HEK293T (cell line): ENCODE measurements at regions of chr16 and their contacts with region 1.

Region 1: GRCh38 chr16:29790183-29790952 is at the start of gene KIF22:
- DNase-seq: peak; percentile 99

Region 2: GRCh38 chr16:29678691-29679267 is 111.6 kb before region 1 on chr16 and contains the start of gene QPRT:
- CTCF ChIA-PET with region 1: interaction called, 3 read pairs
- POLR2A ChIA-PET with region 1: interaction called, 12 read pairs
- DNase-seq: peak; percentile 70

Region 3: GRCh38 chr16:29700253-29700987 is 89.9 kb before region 1 on chr16:
- CTCF ChIA-PET with region 1: interaction called, 6 read pairs
- POLR2A ChIA-PET with region 1: interaction called, 12 read pairs
- DNase-seq: peak; percentile 87

Region 4: GRCh38 chr16:29729116-29729521 is 61.2 kb before region 1 on chr16:
- CTCF ChIA-PET with region 1: interaction called, 3 read pairs
- POLR2A ChIA-PET with region 1: interaction called, 14 read pairs
- DNase-seq: peak; percentile 67

Region 5: DNA sequence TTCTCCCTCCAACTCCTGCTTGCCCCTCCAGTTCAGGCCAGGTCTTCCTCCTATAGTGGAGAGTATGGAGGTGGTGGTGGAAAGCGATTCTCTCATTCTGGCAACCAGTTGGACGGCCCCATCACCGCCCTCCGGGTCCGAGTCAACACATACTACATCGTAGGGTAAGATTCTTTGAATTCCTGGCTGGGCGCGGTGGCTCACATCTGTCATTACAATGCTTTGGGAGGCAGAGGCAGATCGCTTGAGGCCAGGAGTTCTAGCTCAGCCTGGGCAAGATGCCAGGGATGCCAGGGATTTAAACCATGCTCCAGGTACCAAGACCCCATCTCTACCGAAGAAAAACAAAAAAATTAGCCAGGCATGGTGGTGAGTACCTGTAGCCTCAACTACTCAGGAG is 10.9 kb before region 1 on chr16:
- CTCF ChIA-PET with region 1: no interaction called
- POLR2A ChIA-PET with region 1: interaction called, 10 read pairs
- DNase-seq: no peak

Region 6: GRCh38 chr16:29815793-29816693 is 25.7 kb after region 1 on chr16 and contains the start of gene PAGR1:
- CTCF ChIA-PET with region 1: interaction called, 3 read pairs
- POLR2A ChIA-PET with region 1: interaction called, 15 read pairs
- DNase-seq: peak; percentile 99